Caco-2 (cell line): ENCODE measurements at regions of chr22 and their contacts with region 1.

Region 1: GRCh38 chr22:40898850-40899357 is 37.0 kb upstream of the DNAJB7 start:
- DNase-seq: peak in 1 of 2 experiments; percentile 40
- H3K4me3 ChIP-seq: no peak overlapping the region
- H3K4me3 Mint-ChIP-seq: no peak overlapping the region
- H3K27ac Mint-ChIP-seq: no peak overlapping the region
- H3K4me1 ChIP-seq: 0 out of 2 replicates have a peak, but pooled peaks cover 3% of the 10 kb centered on the region
- H3K4me1 Mint-ChIP-seq: peaks cover 2% of the 10 kb centered on the region
- H3K27me3 ChIP-seq: no peaks in the 10 kb centered on the region
- H3K27me3 Mint-ChIP-seq: no peaks in the 10 kb centered on the region
- CTCF ChIP-seq: peak; percentile 11 to 45

Region 2: DNA sequence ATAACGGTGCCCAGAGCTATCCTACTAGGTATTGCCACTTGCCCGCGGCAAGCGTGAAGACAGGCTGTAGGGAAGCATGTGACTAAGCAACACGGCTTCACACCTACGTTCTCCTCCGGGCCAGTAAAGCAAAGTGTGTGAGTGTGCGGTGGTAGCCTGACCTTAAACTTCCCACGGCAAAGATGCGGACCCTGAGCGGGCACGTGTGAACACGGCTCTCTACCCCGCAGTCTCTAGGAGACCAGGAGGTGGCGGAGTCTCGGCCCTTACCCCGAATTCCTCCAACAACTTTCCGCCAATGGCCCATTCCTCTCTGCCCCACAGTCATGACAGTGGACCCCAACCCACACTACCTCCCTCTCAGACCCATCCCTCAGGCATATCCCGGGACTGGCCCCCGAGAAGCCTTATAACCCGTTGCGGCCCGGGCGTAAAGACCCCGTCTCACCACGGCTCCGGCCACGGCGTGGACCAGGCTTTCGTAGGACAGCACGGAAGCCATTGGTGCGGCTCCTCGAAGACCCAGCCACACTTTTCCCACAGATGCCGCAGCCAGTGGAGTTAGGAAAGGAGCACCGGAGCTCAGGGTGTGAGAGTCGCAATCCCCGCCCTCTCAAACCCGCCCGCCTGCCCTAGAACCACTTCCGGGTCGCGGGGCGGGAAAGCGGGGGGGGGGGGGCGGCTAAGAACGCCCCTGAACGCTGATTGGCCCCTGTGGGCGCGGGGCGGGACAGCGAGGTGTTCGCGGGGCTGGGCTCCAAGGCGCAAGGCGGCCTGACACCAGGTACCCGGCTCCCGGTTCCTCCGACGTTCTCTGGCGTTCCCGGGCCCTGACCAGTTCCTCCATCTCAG is 79.9 kb before region 1 on chr22 and contains the start of gene SLC25A17:
- CTCF ChIA-PET with region 1: interaction called, 12 read pairs
- POLR2A ChIA-PET with region 1: interaction called, 4 read pairs
- intact Hi-C with region 1: no loop called
- DNase-seq: peak; percentile 90 to 93
- H3K4me3 ChIP-seq: peak within 1 kb of the TSS; percentile 88
- H3K4me3 Mint-ChIP-seq: peak within 1 kb of the TSS; percentile 81
- H3K27ac Mint-ChIP-seq: peak within 1 kb of the TSS; percentile 73
- H3K4me1 ChIP-seq: peaks cover 15% of the 10 kb centered on the region; the same call in 1 of the 2 replicates
- H3K4me1 Mint-ChIP-seq: peaks cover 16% of the 10 kb centered on the region
- H3K27me3 ChIP-seq: no peaks in the 10 kb centered on the region
- H3K27me3 Mint-ChIP-seq: no peaks in the 10 kb centered on the region
- CTCF ChIP-seq: peak in 1 of 2 experiments; percentile 57
- total RNA-seq, gene SLC25A17: 23.1 and 23.5 TPM in 2 replicates

Region 3: DNA sequence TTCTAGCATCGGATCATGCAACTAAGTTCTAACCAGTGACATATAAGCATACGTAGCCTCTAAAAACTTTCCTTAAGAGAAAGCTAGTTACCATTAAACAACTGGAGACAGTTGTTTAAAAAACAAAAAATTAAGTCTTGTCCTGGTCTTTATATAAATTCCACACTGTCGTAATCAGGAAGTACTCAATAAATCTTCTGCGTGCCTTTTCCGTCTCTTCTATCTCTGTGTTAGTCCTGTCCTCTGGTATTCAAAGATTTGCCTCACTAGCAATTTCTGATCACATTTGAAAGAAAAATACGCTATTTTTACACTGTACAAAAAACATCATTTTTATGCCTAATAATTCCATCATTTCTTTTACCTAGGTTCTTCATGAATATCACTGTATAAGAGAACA is 69.8 kb before region 1 on chr22:
- CTCF ChIA-PET with region 1: no interaction called
- POLR2A ChIA-PET with region 1: no interaction called
- intact Hi-C with region 1: no loop called
- DNase-seq: no peak
- H3K4me3 ChIP-seq: no peak overlapping the region
- H3K4me3 Mint-ChIP-seq: no peak overlapping the region
- H3K27ac Mint-ChIP-seq: peak overlapping the region; percentile 29
- H3K4me1 ChIP-seq: peaks cover 29% of the 10 kb centered on the region
- H3K4me1 Mint-ChIP-seq: peaks cover 13% of the 10 kb centered on the region
- H3K27me3 ChIP-seq: no peaks in the 10 kb centered on the region
- H3K27me3 Mint-ChIP-seq: no peaks in the 10 kb centered on the region
- CTCF ChIP-seq: no peak

Region 4: GRCh38 chr22:40911772-40912171 is 12.9 kb after region 1 on chr22:
- CTCF ChIA-PET with region 1: no interaction called
- POLR2A ChIA-PET with region 1: no interaction called
- intact Hi-C with region 1: no loop called
- DNase-seq: no peak
- H3K4me3 ChIP-seq: no peak overlapping the region
- H3K4me3 Mint-ChIP-seq: no peak overlapping the region
- H3K27ac Mint-ChIP-seq: no peak overlapping the region
- H3K4me1 ChIP-seq: peaks cover 8% of the 10 kb centered on the region
- H3K4me1 Mint-ChIP-seq: no peaks in the 10 kb centered on the region
- H3K27me3 ChIP-seq: no peaks in the 10 kb centered on the region
- H3K27me3 Mint-ChIP-seq: no peaks in the 10 kb centered on the region
- CTCF ChIP-seq: no peak

Region 5: GRCh38 chr22:41022470-41023298 is 123.8 kb after region 1 on chr22:
- CTCF ChIA-PET with region 1: no interaction called
- POLR2A ChIA-PET with region 1: no interaction called
- intact Hi-C with region 1: no loop called
- DNase-seq: peak; percentile 96 to 98
- H3K4me3 ChIP-seq: peak overlapping the region; percentile 81
- H3K4me3 Mint-ChIP-seq: peak overlapping the region; percentile 99
- H3K27ac Mint-ChIP-seq: peak overlapping the region; percentile 100
- H3K4me1 ChIP-seq: peaks cover 4% of the 10 kb centered on the region; the same call in 1 of the 2 replicates
- H3K4me1 Mint-ChIP-seq: peaks cover 15% of the 10 kb centered on the region
- H3K27me3 ChIP-seq: no peaks in the 10 kb centered on the region; the same call in 1 of the 2 replicates
- H3K27me3 Mint-ChIP-seq: no peaks in the 10 kb centered on the region
- CTCF ChIP-seq: no peak